Activated CD4-positive, alpha-beta T cell treated with anti-CD3 and anti-CD28 coated beads for 36 hours (primary cell): ENCODE measurements at regions of chr7 and their contacts with region 1.

Region 1: DNA sequence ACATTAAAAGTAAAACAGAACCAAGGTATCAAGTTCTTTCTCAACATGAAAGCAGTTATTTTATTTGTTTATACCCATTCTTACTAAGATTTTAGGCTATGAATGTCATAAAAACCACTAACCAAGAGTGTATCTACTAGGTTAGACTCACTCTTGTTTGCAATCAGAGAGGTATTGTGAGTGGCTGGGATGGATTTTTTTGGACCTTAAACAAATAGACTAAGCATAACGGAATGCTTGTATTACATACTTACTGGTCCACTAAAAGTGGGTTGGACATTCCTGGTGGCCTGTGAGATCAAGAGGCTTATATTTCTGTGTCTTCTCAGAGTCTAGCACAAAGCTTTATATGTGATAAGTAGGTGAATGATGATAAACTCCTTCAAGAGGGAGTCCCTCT is 32.6 kb upstream of the CBLL1 start:
- DNase-seq: no peak
- ATAC-seq: no peak
- H3K4me3 Mint-ChIP-seq: no peak overlapping the region
- H3K27ac Mint-ChIP-seq: no peak overlapping the region
- H3K4me1 Mint-ChIP-seq: no peaks in the 10 kb centered on the region
- H3K27me3 Mint-ChIP-seq: no peaks in the 10 kb centered on the region

Region 2: DNA sequence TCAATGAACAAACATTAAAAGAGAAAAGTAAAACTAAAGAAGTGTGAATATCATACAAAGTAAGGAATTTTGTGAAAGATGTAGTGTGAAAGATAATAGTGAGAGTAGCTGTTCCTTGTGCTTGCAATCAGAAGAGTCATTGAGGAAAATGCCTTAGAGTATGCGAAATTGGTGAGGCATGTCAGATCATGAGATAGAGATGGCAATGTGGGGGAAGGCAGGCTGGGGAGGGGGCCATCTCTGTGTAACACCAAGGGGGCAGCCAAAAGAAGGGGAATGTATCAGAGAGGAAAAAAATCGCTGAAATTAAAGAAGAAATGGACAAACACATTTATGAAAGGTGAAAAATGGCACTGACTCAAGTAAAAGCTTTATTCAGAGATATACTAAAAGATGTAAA is 686.4 kb before region 1 on chr7:
- CTCF ChIA-PET with region 1: no interaction called
- POLR2A ChIA-PET with region 1: interaction called, 12 read pairs
- intact Hi-C with region 1: no loop called
- DNase-seq: no peak
- ATAC-seq: no peak
- H3K4me3 Mint-ChIP-seq: no peak overlapping the region
- H3K27ac Mint-ChIP-seq: no peak overlapping the region
- H3K4me1 Mint-ChIP-seq: no peaks in the 10 kb centered on the region
- H3K27me3 Mint-ChIP-seq: no peaks in the 10 kb centered on the region

Region 3: GRCh38 chr7:107551936-107552335 is 159.4 kb before region 1 on chr7:
- CTCF ChIA-PET with region 1: no interaction called
- POLR2A ChIA-PET with region 1: no interaction called
- intact Hi-C with region 1: no loop called
- DNase-seq: no peak
- ATAC-seq: no peak
- H3K4me3 Mint-ChIP-seq: no peak overlapping the region
- H3K27ac Mint-ChIP-seq: no peak overlapping the region
- H3K4me1 Mint-ChIP-seq: peaks cover 37% of the 10 kb centered on the region
- H3K27me3 Mint-ChIP-seq: no peaks in the 10 kb centered on the region